PC-3 (cell line): ENCODE measurements at regions of chr12 and their contacts with region 1.

Region 1: DNA sequence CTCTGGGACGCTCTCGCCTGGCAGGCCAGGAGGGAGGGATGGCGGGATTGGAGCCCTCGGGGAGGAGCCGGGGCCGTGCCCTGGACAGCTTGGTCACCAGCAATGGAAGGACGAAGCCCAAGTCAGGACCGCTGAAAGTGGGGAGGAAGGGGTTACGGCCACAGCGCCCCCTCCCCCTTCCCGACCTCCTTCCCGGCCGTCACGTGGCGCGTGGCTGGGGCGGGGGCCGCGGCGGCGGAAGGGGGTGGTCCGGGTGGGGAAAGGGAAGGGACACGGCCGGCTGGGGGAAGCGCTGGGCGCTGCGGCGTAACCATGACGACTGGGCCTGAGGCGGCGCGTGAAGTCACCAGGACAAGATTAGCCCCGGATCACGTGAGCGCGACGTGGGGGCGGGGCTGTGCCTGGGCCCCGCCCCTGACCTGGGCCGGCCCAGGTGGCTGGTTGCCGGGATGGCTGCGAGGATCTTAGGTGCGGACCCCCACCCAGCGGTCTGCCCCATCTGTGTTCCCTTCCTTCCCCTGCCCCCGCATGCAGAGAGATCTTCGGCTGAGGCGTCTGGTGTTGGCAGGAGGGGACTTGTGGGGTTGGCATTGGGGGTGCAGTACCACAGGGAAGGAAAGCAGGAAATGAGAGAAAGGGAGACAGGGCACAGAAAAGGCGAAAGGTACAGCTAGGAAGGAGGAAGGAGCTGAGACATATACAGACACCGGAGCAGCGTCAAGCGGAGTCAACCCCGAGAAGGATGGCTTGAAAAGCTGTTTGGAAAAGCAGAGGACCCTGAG is 6.2 kb downstream of the MAP3K12 start:
- DNase-seq: peak; percentile 88
- ATAC-seq: peak; percentile 94
- H3K4me3 ChIP-seq: peak overlapping the region; percentile 65
- H3K27ac ChIP-seq: no peak overlapping the region
- H3K4me1 ChIP-seq: peaks cover 7% of the 10 kb centered on the region; the same call in 1 of the 2 replicates
- H3K27me3 ChIP-seq: no peaks in the 10 kb centered on the region
- CTCF ChIP-seq: no peak

Region 2: GRCh38 chr12:53476769-53477209 is 16.2 kb before region 1 on chr12:
- CTCF ChIA-PET with region 1: interaction called, 7 read pairs
- POLR2A ChIA-PET with region 1: interaction called, 10 read pairs
- intact Hi-C with region 1: no loop called
- DNase-seq: peak; percentile 48
- ATAC-seq: peak; percentile 40
- H3K4me3 ChIP-seq: no peak overlapping the region
- H3K27ac ChIP-seq: no peak overlapping the region
- H3K4me1 ChIP-seq: no peaks in the 10 kb centered on the region
- H3K27me3 ChIP-seq: no peaks in the 10 kb centered on the region
- CTCF ChIP-seq: peak; percentile 61

Region 3: GRCh38 chr12:53770281-53770680 is 277.3 kb after region 1 on chr12:
- CTCF ChIA-PET with region 1: no interaction called
- POLR2A ChIA-PET with region 1: no interaction called
- intact Hi-C with region 1: no loop called
- DNase-seq: peak; percentile 97
- ATAC-seq: peak; percentile 91
- H3K4me3 ChIP-seq: no peak overlapping the region
- H3K27ac ChIP-seq: peak overlapping the region; percentile 80
- H3K4me1 ChIP-seq: peaks cover 40% of the 10 kb centered on the region
- H3K27me3 ChIP-seq: no peaks in the 10 kb centered on the region
- CTCF ChIP-seq: no peak